ENCODE measurements at regions of chr4 and their contacts with region 1.

Region 1: DNA sequence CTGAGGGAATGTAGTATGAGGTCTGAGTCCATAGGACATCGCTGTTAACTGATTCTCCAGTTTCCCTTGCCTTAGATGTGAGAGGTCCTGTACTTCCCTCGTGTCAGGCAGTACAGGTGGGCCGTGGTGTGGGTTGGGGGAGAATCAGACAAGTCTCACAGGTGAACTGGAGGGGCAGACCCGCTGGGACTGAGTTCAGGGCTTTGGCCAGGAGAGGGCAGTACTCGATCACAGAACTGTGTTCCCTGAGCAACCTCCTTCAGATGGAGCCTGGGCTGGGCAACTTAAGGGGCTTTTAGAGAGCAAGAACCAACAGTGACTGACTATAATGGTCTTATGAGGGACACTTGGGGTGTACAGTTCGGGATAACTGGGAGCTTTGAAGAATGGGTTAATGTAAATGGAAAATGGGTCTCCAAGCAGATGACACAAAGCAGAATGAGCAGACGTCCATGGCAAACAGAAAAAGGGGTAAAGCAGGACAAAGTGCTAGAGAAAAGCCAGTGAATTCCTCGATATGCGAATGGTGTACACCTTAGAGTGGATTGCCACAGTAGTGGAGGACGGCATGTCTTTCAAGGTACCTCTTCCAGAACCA is 83.6 kb downstream of the CCNG2 start:
- DNase-seq: peak in 1 of 2 donors; percentile 23
- H3K4me3 ChIP-seq: no peak overlapping the region
- H3K27ac ChIP-seq: no peak overlapping the region
- H3K4me1 ChIP-seq: no peaks in the 10 kb centered on the region
- H3K27me3 ChIP-seq: peaks cover 0 to 2% of the 10 kb centered on the region in 2 donors
- CTCF ChIP-seq: peak; percentile 54 to 58

Region 2: DNA sequence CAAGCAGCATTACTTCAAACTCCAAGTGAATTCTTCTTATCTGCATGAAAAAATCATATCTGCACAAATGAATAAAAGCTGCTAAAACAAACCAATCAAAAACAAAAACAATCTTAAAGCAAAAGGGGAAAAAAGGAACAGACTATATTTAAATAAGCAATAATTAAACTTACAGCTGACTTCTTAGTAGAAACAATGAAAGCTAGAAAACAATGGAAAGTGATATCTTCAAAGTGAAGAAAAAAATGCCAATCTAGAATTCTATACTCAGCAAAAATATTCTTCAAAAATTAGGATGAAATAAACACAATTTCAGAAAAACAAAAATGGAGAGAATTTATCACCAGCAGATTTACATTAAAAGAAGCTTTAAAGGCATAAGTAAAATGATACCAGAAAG is 914.1 kb before region 1 on chr4:
- intact Hi-C with region 1: loop called (anchors 5 kb)
- DNase-seq: no peak
- H3K4me3 ChIP-seq: no peak overlapping the region
- H3K27ac ChIP-seq: no peak overlapping the region
- H3K4me1 ChIP-seq: no peaks in the 10 kb centered on the region
- H3K27me3 ChIP-seq: no peaks in the 10 kb centered on the region
- CTCF ChIP-seq: no peak

Region 3: GRCh38 chr4:77358315-77358928 is 117.9 kb after region 1 on chr4:
- intact Hi-C with region 1: loop called (anchors 10 kb)
- DNase-seq: no peak
- H3K4me3 ChIP-seq: no peak overlapping the region
- H3K27ac ChIP-seq: no peak overlapping the region
- H3K4me1 ChIP-seq: no peaks in the 10 kb centered on the region
- H3K27me3 ChIP-seq: no peaks in the 10 kb centered on the region
- CTCF ChIP-seq: peak; percentile 42 to 49

Measured in tibial artery (tissue), 4 donors.